WTC11 (cell line): ENCODE measurements at regions of chr16 and their contacts with region 1.

Region 1: DNA sequence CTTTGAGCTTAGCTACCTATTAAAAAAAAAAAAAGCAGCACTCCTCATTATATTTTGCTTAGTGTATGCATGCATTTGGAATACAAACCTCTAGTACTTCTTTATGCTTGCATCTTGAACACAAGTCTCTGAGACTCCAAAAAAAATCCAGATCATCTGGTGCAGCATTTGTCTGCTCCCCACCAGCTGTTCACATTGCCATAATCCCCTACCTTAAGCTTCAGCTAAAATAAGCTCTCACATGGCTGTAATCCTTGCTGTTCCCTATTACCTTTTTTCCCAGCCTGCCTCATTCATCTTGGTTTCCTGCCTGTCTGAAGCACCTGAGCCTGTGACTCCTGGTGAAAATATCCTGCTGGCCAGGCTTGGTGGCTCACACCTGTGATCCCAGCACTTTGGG is 7.5 kb upstream of the NFATC2IP start:
- DNase-seq: no peak
- ATAC-seq: no peak
- H3K4me3 Mint-ChIP-seq: no peak overlapping the region
- H3K27ac Mint-ChIP-seq: no peak overlapping the region
- H3K4me1 Mint-ChIP-seq: peaks cover 8% of the 10 kb centered on the region
- H3K27me3 Mint-ChIP-seq: peaks cover 6% of the 10 kb centered on the region
- CTCF ChIP-seq: no peak

Region 2: GRCh38 chr16:28879841-28880588 is 63.3 kb before region 1 on chr16:
- CTCF ChIA-PET with region 1: interaction called, 18 read pairs
- POLR2A ChIA-PET with region 1: no interaction called
- DNase-seq: peak; percentile 93
- ATAC-seq: peak; percentile 75
- H3K4me3 Mint-ChIP-seq: peak overlapping the region; percentile 84
- H3K27ac Mint-ChIP-seq: no peak overlapping the region
- H3K4me1 Mint-ChIP-seq: peaks cover 39% of the 10 kb centered on the region
- H3K27me3 Mint-ChIP-seq: peaks cover 28% of the 10 kb centered on the region
- CTCF ChIP-seq: no peak

Region 3: DNA sequence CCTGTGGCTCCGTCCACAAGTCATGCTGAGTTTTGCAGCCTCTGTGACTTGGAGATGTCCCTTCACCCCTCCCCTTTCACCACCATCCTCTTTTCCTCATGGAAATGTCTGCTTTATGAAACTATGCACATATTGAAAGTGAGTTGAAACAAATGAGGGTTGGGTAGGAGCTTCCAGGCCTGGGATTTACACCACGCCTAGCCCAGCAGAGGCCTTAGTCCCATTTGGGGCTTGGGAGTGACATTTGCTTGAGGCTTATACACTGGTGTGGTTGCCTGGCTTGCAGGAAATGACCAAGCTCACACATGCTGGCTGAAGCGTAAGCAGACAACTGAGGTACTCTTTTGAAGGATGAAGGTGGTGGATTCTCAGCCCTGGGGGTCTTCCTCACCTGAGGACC is 20.8 kb after region 1 on chr16:
- CTCF ChIA-PET with region 1: no interaction called
- POLR2A ChIA-PET with region 1: no interaction called
- DNase-seq: no peak
- ATAC-seq: no peak
- H3K4me3 Mint-ChIP-seq: no peak overlapping the region
- H3K27ac Mint-ChIP-seq: no peak overlapping the region
- H3K4me1 Mint-ChIP-seq: no peaks in the 10 kb centered on the region
- H3K27me3 Mint-ChIP-seq: no peaks in the 10 kb centered on the region
- CTCF ChIP-seq: no peak

Region 4: DNA sequence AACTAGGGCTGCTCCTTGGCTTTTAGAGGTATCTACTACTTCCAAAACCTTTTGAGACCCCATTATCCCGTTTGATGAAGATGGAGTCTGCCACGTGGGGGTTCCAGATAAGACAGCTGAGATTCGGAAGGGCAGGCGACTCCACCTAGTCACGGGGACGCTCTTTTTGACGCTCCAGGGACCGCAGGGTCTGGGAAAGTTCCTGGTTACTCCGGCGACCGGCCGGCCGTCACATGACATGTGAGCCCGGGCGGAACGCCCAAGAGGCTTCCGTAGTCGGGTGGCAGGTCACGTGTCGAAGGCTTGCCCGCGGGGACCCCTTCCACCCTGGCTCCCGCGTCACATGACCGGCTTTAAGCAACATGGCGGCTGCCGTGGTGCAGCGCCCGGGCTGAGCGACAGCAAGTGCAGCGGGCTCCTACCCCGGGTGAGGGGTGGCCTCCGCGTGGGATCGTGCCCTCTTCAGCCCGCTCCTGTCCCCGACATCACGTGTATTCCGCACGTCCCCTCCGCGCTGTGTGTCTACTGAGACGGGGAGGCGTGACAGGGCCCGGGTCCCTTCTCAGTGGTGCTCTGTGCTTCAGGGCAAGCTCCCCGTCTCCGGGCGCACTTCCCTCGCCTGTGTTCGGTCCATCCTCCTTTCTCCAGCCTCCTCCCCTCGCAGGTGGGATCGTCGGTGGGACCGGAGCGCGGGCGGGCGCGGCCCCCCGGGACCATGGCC is 31.3 kb after region 1 on chr16 and contains the start of gene SPNS1:
- CTCF ChIA-PET with region 1: interaction called, 15 read pairs
- POLR2A ChIA-PET with region 1: no interaction called
- DNase-seq: peak; percentile 97
- ATAC-seq: peak; percentile 83
- H3K4me3 Mint-ChIP-seq: peak within 1 kb of the TSS; percentile 95
- H3K27ac Mint-ChIP-seq: peak within 1 kb of the TSS; percentile 98
- H3K4me1 Mint-ChIP-seq: peaks cover 7% of the 10 kb centered on the region
- H3K27me3 Mint-ChIP-seq: no peaks in the 10 kb centered on the region
- CTCF ChIP-seq: no peak
- total RNA-seq, gene SPNS1: 52.4 to 64.4 TPM (median 54.0 TPM) in 3 replicates

Region 5: DNA sequence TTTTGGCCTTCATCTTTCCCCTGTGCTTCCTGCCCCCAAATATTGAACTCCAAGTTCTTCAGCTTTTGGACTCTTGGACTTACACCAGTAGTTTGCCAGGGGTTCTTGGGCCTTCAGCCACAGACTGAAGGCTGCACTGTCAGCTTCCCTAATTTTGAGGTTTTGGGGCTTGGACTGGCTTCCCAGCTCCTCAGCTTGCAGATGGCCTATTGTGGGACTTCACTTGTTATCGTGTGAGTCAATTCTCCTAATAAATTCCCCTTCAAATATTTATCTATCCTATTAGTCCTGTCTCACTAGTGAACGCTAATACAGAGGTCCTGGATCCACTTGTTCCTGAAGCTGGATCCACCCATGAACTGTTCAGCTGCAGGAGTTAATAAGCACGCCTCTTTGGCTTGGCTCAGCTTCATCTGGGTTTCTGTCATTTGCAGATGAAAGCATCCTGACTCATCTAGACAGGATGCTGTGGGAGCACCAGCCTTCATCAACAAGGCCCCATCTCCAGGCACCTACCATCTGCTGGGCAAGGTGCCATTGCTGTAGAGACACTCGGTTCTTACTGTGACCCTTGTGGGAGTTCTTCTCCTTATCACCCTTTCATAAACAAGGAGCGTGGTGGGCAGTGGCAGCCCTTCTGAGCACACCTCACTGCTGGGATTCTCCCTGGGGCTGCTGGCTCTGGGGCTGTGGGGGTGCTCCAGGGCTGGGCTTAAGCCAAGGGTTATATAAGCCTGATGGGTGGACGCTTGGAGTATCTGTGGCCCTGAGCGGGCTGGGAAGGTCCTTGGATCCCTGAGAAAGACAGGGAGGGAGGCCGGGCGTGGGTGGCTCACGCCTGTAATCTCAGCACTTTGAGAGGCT is 64.7 kb after region 1 on chr16:
- CTCF ChIA-PET with region 1: no interaction called
- POLR2A ChIA-PET with region 1: no interaction called
- DNase-seq: no peak
- ATAC-seq: no peak
- H3K4me3 Mint-ChIP-seq: no peak overlapping the region
- H3K27ac Mint-ChIP-seq: no peak overlapping the region
- H3K4me1 Mint-ChIP-seq: no peaks in the 10 kb centered on the region
- H3K27me3 Mint-ChIP-seq: no peaks in the 10 kb centered on the region
- CTCF ChIP-seq: no peak

Region 6: DNA sequence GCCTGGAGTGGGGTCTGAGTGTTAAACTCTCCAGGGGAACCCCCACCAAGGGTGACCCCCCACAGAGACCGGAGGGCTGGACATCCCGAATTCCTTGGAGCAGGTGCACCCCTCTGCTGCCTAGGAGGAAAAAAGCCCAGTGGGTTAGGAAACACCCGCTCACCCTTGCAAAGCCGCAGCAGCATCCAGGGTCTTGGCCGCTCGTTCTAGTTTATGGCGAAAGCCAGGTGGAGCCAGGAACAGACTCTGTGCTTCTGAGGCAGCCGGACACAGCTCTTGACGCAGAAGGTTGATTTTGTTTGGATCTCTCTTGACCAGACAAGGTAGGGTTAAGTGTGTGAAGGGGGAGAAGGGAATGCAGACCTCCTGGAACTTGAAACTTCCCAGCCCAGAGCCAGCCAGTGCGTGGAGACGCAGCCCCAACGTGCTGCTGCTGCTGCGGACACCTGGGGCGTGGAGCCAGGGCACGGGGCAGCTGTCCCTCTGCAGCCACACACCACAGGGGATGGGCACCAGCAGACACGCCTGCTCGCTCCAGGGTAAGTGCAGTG is 196.1 kb after region 1 on chr16:
- CTCF ChIA-PET with region 1: no interaction called
- POLR2A ChIA-PET with region 1: no interaction called
- DNase-seq: peak; percentile 7
- ATAC-seq: no peak
- H3K4me3 Mint-ChIP-seq: no peak overlapping the region
- H3K27ac Mint-ChIP-seq: no peak overlapping the region; the same call in 1 of the 2 replicates
- H3K4me1 Mint-ChIP-seq: 0 out of 2 replicates have a peak, but pooled peaks cover 8% of the 10 kb centered on the region
- H3K27me3 Mint-ChIP-seq: no peaks in the 10 kb centered on the region; the same call in 1 of the 2 replicates
- CTCF ChIP-seq: no peak